Right lobe of liver (tissue), 6 donors: ENCODE measurements at regions of chr12 and their contacts with region 1.

Region 1: GRCh38 chr12:13864081-13864673 is 117.2 kb downstream of the GRIN2B start:
- DNase-seq: peak; percentile 79 to 80 (median 79)
- ATAC-seq: peak; percentile 97 to 99 (median 98)
- H3K4me3 ChIP-seq: no peak overlapping the region
- H3K27ac ChIP-seq: no peak overlapping the region
- H3K4me1 ChIP-seq: no peaks in the 10 kb centered on the region
- H3K27me3 ChIP-seq: peaks cover 0 to 5% of the 10 kb centered on the region in 2 donors
- CTCF ChIP-seq: peak; percentile 82 to 95 (median 92)
- POLR2A ChIP-seq: no peak

Region 2: DNA sequence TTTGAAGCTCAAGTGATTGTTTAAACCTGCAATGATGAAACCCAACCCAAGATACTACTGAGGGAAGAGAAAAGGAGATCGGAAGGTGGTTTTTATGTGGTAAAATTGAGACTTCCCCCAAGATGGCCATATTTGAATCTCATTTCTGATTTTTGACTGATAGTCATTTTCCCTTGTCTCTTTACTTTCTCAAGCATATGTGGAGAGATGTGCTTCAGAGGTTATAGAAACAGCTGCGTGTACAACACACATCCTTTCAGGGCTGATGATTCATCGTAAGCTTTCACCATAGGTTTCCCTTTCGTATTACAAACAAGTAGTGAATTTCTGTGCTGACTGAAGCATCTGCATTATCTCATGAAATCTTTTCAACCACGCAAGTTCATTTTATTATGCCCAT is 391.5 kb before region 1 on chr12:
- intact Hi-C with region 1: no loop called
- DNase-seq: no peak
- ATAC-seq: no peak
- H3K4me3 ChIP-seq: no peak overlapping the region
- H3K27ac ChIP-seq: no peak overlapping the region
- H3K4me1 ChIP-seq: no peaks in the 10 kb centered on the region
- H3K27me3 ChIP-seq: no peaks in the 10 kb centered on the region
- CTCF ChIP-seq: no peak
- POLR2A ChIP-seq: no peak

Region 3: GRCh38 chr12:13941258-13942249 is 77.4 kb after region 1 on chr12:
- intact Hi-C with region 1: loop called in 1 of 2 experiments (anchors 10 kb)
- DNase-seq: peak in 2 of 3 donors; percentile 58 to 71
- ATAC-seq: peak; percentile 99 to 100 (median 99)
- H3K4me3 ChIP-seq: no peak overlapping the region
- H3K27ac ChIP-seq: no peak overlapping the region
- H3K4me1 ChIP-seq: peaks cover 0 to 3% (median 0%) of the 10 kb centered on the region in 4 donors
- H3K27me3 ChIP-seq: no peaks in the 10 kb centered on the region
- CTCF ChIP-seq: peak; percentile 47 to 66 (median 58)
- POLR2A ChIP-seq: no peak